Activated CD4-positive, alpha-beta memory T cell treated with anti-CD3 and anti-CD28 coated beads for 36 hours (primary cell): ENCODE measurements at regions of chr20 and their contacts with region 1.

Region 1: DNA sequence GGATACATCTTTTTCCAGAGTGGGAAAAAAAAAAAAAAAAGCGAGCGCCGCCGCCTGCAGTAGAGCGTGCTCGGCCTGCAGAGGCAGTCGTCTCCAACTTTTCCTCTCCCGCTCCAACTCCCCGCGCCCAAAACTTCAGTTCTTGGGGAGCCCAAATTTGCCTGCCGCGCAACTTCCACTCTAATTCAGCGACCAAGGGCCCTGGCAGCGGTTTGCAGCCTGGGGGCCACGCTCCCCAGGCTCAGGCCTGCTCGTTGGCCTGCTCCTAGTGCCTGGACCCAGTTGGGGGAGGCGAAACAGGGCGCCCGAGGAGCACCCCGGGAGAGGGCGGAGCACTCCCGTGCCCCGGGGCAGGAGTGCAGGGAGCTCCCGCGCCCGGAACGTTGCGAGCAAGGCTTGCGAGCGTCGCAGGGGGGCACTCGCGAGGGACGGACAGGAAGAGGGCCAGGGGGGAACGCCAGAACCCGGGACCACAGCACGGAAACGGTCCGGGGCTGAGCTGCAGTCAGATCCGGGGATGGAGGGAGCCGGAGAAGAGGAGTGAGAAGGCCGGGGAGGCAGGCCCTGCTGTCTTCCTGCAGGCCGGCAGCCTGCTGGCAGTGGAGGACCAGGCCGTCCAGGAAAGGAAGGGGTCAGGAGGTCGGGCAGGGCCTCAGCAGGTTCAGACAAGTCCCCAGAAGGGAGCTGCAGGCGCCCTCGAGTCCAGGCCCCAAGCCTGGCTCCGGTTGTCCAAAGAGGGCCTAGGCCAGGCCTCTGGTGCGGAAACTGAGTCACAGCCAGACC is at the start of gene STX16:
- DNase-seq: peak; percentile 93
- H3K4me3 Mint-ChIP-seq: peak within 1 kb of the TSS; percentile 99
- H3K27ac Mint-ChIP-seq: peak within 1 kb of the TSS; percentile 100
- H3K4me1 Mint-ChIP-seq: peaks cover 17% of the 10 kb centered on the region
- H3K27me3 Mint-ChIP-seq: no peaks in the 10 kb centered on the region
- total RNA-seq, gene STX16: 88.7 to 104 TPM

Region 2: DNA sequence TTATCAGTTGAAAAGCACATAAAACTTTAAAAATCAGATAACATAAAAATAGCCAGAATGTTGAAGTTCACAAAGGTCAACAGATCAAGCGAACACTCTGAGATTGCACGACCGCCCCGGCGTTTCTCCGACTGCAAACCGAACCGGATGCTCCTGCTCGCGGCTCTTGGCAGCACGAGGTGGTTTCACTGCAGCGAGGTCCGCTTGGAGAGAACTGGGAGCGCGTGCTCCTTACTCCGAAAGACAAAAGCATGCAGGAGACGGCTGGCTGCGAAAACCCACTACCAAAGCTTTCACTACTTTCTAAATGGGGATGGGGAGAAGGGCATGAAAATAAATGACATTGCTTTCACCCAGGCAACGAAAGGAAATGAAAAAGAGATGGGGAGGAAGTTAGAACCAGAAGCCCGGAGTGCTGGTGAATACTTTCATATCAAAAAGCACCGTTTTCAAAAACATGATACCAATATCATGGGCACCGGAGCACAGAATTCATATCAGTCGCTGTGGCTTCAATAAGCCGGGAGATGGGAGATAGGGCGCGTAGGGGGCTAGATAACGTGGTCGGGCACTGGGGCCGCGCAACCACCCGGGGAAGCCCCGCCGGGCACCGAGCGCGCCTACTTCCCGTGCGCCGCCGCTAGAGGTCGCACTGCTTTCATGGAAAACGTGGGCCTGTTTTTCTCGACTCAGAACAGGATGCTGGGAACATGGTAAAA is 414.2 kb before region 1 on chr20:
- CTCF ChIA-PET with region 1: interaction called, 6 read pairs
- POLR2A ChIA-PET with region 1: interaction called, 3 read pairs
- intact Hi-C with region 1: loop called (anchors 1 kb)
- DNase-seq: peak; percentile 92
- H3K4me3 Mint-ChIP-seq: peak overlapping the region; percentile 81
- H3K27ac Mint-ChIP-seq: peak overlapping the region; percentile 78
- H3K4me1 Mint-ChIP-seq: peaks cover 23% of the 10 kb centered on the region
- H3K27me3 Mint-ChIP-seq: peaks cover 2% of the 10 kb centered on the region

Region 3: DNA sequence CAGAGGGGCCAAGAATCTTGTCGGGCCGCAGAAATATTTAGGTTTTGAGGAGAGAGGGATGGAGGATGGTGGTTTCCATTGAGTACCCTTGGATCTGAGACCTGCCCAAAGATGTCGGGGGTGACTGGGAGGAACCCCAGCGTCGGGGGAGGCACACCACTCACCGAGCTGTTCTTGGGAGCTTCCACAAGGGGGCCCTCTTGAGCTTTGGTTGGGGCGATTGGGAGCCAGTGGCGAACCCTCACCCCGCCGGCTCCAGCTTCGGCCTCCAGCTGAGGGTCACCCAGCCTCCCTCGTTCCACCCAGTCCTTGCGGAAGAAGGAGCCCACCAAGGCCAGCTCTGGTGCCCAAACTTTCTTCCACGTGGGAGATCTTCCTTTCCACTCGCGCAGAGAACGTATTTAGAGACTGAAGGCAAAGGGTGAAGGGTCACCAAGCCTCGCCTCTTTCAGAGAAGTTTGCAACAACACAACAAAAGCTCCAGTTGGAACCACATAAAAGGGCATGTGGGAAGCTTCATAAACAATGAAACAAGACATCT is 169.4 kb before region 1 on chr20:
- CTCF ChIA-PET with region 1: interaction called, 3 read pairs
- POLR2A ChIA-PET with region 1: interaction called, 4 read pairs
- intact Hi-C with region 1: loop called (anchors 5 kb)
- DNase-seq: peak; percentile 61
- H3K4me3 Mint-ChIP-seq: no peak overlapping the region
- H3K27ac Mint-ChIP-seq: no peak overlapping the region
- H3K4me1 Mint-ChIP-seq: no peaks in the 10 kb centered on the region
- H3K27me3 Mint-ChIP-seq: peaks cover 13% of the 10 kb centered on the region

Region 4: DNA sequence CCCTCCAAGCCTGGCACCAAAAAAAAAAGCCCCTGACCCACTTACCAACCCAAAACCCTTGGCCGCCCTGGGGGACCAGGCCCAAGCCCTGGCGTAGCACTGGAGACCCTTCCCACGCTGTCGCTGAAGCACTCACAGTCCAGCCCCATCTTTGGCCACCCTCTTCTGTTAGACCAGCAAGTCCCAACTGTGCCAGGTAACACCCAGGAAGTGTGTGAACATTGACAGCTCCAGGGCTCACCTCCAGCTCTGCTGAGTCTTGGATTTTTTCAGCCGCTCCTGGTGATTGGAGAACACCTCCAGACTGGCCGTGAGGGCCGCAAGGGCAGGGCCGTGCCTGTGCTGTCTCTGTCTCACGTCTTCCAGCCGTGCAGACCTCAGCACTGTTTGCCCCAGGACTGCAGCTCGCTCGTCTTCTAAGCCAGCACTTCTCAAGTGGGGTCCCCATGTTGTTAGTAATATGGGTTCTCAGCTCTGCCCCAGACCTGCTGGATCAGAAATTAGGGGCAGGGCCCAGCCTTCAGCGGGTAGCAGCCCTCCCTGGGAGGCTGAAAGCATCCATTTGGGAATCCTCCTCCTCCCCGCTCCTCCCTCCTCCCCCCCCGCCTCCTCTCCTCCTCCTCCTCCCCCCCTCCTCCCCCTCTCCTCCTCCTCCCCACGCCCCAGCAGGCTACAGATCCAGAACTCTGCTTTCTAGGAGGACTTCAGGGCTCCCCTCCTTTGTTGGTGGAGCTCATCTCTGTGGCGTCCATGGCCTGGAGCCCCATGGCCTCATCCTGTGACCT is 59.7 kb after region 1 on chr20:
- CTCF ChIA-PET with region 1: no interaction called
- POLR2A ChIA-PET with region 1: no interaction called
- intact Hi-C with region 1: no loop called
- DNase-seq: peak; percentile 4
- H3K4me3 Mint-ChIP-seq: no peak overlapping the region
- H3K27ac Mint-ChIP-seq: no peak overlapping the region
- H3K4me1 Mint-ChIP-seq: no peaks in the 10 kb centered on the region
- H3K27me3 Mint-ChIP-seq: no peaks in the 10 kb centered on the region

Region 5: GRCh38 chr20:58818585-58819285 is 167.8 kb after region 1 on chr20:
- CTCF ChIA-PET with region 1: interaction called, 3 read pairs
- POLR2A ChIA-PET with region 1: no interaction called
- intact Hi-C with region 1: loop called (anchors 2 kb)
- DNase-seq: peak; percentile 91
- H3K4me3 Mint-ChIP-seq: no peak overlapping the region
- H3K27ac Mint-ChIP-seq: no peak overlapping the region
- H3K4me1 Mint-ChIP-seq: peaks cover 11% of the 10 kb centered on the region
- H3K27me3 Mint-ChIP-seq: peaks cover 21% of the 10 kb centered on the region

Region 6: GRCh38 chr20:58980700-58981627 is 330.0 kb after region 1 on chr20 and contains the start of gene NELFCD:
- CTCF ChIA-PET with region 1: interaction called, 3 read pairs
- POLR2A ChIA-PET with region 1: interaction called, 4 read pairs
- intact Hi-C with region 1: loop called (anchors 5 kb)
- DNase-seq: peak; percentile 92
- H3K4me3 Mint-ChIP-seq: peak within 1 kb of the TSS; percentile 91
- H3K27ac Mint-ChIP-seq: peak within 1 kb of the TSS; percentile 88
- H3K4me1 Mint-ChIP-seq: peaks cover 34% of the 10 kb centered on the region
- H3K27me3 Mint-ChIP-seq: no peaks in the 10 kb centered on the region
- total RNA-seq, gene NELFCD: 80.5 to 92.3 TPM